Posterior cingulate gyrus (tissue), 11 donors: ENCODE measurements at regions of chr2 and their contacts with region 1.

Region 1: GRCh38 chr2:8681786-8682692 is at the start of gene ID2:
- DNase-seq: peak; percentile 96 to 100 (median 98)

Region 2: GRCh38 chr2:7097348-7097895 is 1584.6 kb before region 1 on chr2:
- intact Hi-C with region 1: loop called (anchors 2 kb)
- DNase-seq: peak; percentile 63 to 97 (median 80)

Region 3: GRCh38 chr2:7427293-7428060 is 1254.6 kb before region 1 on chr2:
- intact Hi-C with region 1: loop called (anchors 1 kb)
- DNase-seq: no peak

Region 4: GRCh38 chr2:8268172-8268783 is 413.8 kb before region 1 on chr2:
- intact Hi-C with region 1: loop called (anchors 10 kb)
- DNase-seq: peak in 3 of 10 donors; percentile 31 to 83 (median 49)

Region 5: GRCh38 chr2:8574144-8575037 is 107.6 kb before region 1 on chr2:
- intact Hi-C with region 1: loop called (anchors 5 kb)
- DNase-seq: peak in 2 of 10 donors; percentile 72 to 87

Region 6: DNA sequence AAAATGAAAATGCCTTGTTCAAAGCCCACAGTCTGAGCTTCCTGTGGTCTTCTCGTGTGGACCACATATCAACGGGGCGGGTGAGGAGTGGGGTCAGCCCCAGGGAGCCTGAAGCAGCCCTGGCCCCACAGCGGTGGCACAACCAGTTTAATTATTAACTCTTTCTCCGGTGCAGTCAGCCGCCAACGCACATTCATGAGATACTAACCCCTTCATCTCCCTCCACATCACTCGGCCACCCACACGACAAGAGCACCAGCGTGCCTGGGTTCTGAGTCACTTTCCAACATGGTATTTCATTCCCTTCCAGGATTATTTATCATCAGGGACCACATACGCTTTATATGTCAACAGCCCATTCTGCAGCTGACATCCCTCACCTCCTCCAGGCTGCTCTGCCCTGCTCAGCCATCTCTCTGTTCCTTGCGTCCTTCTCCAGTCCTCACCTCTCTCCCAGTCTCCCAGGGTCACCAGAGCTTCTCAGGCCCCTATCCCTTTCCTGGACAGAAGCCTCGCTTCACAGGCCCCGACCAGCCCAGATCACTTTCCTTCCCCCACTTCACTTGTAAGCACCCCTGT is 48.2 kb before region 1 on chr2:
- intact Hi-C with region 1: no loop called
- DNase-seq: peak in 1 of 10 donors; percentile 43

Region 7: DNA sequence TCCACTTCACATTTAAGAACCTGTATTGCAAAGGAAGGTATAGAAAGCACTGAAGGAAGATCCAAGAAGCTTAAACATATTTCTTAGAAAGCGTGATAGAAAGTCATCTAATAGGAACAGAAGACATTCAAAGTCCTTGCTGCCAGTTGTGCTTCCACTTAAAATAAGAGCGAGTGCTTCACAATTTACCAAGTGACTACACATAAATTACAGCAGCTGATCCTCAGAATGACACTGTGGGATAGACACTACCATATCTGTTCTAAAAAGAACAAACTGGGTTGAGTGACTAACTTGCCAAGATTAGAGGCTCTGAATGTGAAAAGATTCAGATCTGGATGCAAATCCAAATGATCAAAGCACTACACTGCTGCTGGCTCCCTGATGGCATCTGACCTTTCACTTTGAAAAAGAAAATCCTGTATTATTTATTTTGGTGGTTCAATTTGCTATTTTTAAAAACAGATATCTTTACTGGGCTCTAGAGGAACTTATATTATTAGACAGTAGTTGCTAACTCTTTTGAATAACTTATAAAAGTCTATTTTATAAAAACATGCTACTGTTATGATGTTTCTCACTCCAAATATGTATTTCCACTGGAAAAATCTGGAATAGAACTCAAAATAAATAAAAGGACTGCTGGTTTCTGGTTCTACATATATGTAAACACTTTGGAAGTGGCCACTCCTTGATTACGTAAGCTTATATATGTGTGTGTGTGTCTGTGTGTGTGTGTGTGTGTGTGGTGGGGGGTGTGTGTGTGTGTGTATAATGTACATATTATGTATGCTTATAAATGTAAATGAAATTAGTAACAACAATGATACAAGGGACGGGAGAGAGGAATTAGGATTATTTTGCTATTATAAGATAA is 98.0 kb after region 1 on chr2:
- intact Hi-C with region 1: no loop called
- DNase-seq: no peak